ENCODE measurements at regions of chr12 and their contacts with region 1.

Region 1: DNA sequence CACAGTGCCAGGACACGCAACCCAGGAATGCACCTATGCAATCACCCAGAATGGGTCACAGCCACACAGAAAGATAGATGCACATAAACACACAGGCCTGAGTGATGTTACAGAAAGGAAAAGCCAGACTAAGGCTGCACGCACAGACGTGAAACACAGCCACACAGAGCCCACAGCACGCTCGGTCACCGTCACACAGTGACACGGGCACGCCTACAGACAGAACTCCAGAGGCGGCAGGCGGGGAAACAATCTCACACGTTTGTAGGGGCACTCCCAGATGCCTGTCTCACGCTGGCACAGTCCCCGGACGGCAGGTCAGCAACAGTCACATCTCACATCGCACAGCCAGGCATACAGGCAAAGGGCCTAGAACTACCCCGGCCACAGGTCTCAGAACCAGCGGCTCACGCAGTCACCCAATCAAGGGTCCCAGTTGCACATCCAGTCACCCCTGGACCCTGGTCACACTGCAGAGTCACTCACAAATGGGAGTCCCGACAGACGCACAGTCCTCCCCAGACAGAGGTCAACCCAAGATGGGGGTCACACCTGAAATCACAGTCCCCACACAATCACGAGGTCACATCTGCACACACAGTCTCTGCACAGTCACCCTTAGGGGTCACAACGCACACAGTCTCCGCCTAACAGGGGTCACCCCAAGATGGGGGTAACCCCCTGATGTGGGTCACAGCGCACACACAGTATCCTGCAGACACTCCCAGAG is 790 bp downstream of the SSH1 start:
- DNase-seq: peak; percentile 74
- H3K4me3 Mint-ChIP-seq: peak overlapping the region; percentile 92
- H3K27ac Mint-ChIP-seq: peak overlapping the region; percentile 75
- H3K4me1 Mint-ChIP-seq: peaks cover 40% of the 10 kb centered on the region
- H3K27me3 Mint-ChIP-seq: no peaks in the 10 kb centered on the region

Region 2: GRCh38 chr12:108838194-108839017 is 18.2 kb before region 1 on chr12:
- CTCF ChIA-PET with region 1: no interaction called
- intact Hi-C with region 1: loop called (anchors 1 kb)
- DNase-seq: peak; percentile 81
- H3K4me3 Mint-ChIP-seq: peak overlapping the region; percentile 25
- H3K27ac Mint-ChIP-seq: peak overlapping the region; percentile 83
- H3K4me1 Mint-ChIP-seq: peaks cover 29% of the 10 kb centered on the region
- H3K27me3 Mint-ChIP-seq: no peaks in the 10 kb centered on the region

Region 3: GRCh38 chr12:108930155-108930554 is 73.6 kb after region 1 on chr12:
- CTCF ChIA-PET with region 1: no interaction called
- intact Hi-C with region 1: no loop called
- DNase-seq: no peak
- H3K4me3 Mint-ChIP-seq: no peak overlapping the region
- H3K27ac Mint-ChIP-seq: no peak overlapping the region
- H3K4me1 Mint-ChIP-seq: no peaks in the 10 kb centered on the region
- H3K27me3 Mint-ChIP-seq: no peaks in the 10 kb centered on the region

Measured in activated naive CD4-positive, alpha-beta T cell treated with anti-CD3 and anti-CD28 coated beads for 36 hours (primary cell).